Colonic mucosa (tissue), 4 donors: ENCODE measurements at regions of chr2 and their contacts with region 1.

Region 1: GRCh38 chr2:236180831-236181453 is 12.8 kb upstream of the GBX2 start:
- DNase-seq: peak; percentile 69
- H3K4me3 ChIP-seq: no peak overlapping the region
- H3K27ac ChIP-seq: no peak overlapping the region
- H3K4me1 ChIP-seq: peaks cover 3% of the 10 kb centered on the region
- H3K27me3 ChIP-seq: peaks cover 43% of the 10 kb centered on the region
- CTCF ChIP-seq: peak; percentile 69

Region 2: GRCh38 chr2:235551965-235552364 is 629.0 kb before region 1 on chr2:
- intact Hi-C with region 1: no loop called
- DNase-seq: peak; percentile 68
- H3K4me3 ChIP-seq: no peak overlapping the region
- H3K27ac ChIP-seq: no peak overlapping the region
- H3K4me1 ChIP-seq: peaks cover 6% of the 10 kb centered on the region
- H3K27me3 ChIP-seq: no peaks in the 10 kb centered on the region
- CTCF ChIP-seq: peak; percentile 52

Region 3: DNA sequence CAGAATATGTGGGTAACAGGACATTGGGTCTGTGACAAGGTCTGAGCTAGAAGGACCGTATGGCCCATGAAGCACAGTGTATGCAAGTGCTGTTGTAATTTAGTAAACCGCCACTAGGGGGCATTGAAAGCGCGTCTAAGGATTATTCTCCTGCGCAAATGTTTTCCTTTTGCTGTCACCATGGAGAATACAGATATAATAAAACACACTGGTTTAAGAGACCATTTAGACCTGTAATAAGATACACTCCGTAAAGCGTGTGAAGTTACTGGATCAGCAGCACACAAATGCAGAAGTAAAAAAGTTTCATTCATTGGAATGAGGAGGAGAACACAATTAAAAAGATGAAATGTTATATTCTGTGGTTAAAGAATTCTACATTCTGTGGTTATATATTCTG is 414.7 kb before region 1 on chr2:
- intact Hi-C with region 1: loop called (anchors 5 kb)
- DNase-seq: peak; percentile 85
- H3K4me3 ChIP-seq: no peak overlapping the region
- H3K27ac ChIP-seq: no peak overlapping the region
- H3K4me1 ChIP-seq: no peaks in the 10 kb centered on the region
- H3K27me3 ChIP-seq: no peaks in the 10 kb centered on the region
- CTCF ChIP-seq: peak; percentile 92

Region 4: GRCh38 chr2:235779444-235779896 is 401.5 kb before region 1 on chr2:
- intact Hi-C with region 1: loop called (anchors 5 kb)
- DNase-seq: peak; percentile 76
- H3K4me3 ChIP-seq: no peak overlapping the region
- H3K27ac ChIP-seq: no peak overlapping the region
- H3K4me1 ChIP-seq: no peaks in the 10 kb centered on the region
- H3K27me3 ChIP-seq: no peaks in the 10 kb centered on the region
- CTCF ChIP-seq: peak; percentile 79

Region 5: DNA sequence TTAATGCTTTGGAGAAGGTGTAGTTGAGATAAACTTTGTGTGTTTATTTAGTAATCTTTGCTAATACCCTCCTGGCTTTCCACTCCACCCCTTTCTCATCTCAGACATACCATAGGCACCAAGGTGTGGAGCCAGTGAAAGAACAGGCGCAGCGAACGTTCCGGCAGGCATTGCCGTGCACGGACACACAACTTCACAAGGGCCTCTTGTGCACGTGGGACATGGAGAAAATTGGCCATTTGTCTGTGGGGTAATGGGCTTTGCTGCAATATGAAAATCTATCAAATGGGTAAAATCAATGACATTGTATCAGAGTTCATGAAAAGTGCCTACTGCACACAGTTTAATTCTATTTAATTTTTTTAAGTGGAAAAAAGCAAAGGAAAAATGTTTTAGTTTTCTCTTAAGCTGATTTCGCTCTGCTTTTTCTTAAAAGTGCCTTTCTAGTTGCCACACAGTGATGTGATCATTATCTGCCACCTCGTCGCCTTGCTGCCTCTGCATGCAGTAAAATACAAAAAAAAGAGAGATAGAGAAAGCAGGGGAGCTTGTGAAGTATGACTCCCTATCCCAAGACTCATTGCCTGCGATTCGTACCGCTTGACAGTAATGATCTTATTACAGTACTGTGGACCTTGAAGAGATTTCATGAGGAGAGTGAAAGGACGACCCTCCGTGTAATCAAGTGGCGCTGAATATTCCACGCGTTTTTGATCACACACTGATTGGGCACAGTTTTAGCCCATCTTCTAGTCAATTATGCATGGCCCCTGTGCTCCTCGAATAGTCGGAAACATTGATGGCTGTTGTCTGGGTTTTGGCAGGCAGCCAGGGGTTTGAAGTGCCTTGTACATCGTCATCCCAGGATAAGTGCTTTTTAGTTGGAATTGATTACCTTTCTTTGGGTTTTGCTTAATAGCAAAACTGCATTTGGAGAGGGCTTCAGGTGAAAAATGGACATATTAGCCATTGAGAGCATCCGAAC is 201.2 kb before region 1 on chr2:
- intact Hi-C with region 1: no loop called
- DNase-seq: no peak
- H3K4me3 ChIP-seq: no peak overlapping the region
- H3K27ac ChIP-seq: no peak overlapping the region
- H3K4me1 ChIP-seq: no peaks in the 10 kb centered on the region
- H3K27me3 ChIP-seq: no peaks in the 10 kb centered on the region
- CTCF ChIP-seq: no peak

Region 6: DNA sequence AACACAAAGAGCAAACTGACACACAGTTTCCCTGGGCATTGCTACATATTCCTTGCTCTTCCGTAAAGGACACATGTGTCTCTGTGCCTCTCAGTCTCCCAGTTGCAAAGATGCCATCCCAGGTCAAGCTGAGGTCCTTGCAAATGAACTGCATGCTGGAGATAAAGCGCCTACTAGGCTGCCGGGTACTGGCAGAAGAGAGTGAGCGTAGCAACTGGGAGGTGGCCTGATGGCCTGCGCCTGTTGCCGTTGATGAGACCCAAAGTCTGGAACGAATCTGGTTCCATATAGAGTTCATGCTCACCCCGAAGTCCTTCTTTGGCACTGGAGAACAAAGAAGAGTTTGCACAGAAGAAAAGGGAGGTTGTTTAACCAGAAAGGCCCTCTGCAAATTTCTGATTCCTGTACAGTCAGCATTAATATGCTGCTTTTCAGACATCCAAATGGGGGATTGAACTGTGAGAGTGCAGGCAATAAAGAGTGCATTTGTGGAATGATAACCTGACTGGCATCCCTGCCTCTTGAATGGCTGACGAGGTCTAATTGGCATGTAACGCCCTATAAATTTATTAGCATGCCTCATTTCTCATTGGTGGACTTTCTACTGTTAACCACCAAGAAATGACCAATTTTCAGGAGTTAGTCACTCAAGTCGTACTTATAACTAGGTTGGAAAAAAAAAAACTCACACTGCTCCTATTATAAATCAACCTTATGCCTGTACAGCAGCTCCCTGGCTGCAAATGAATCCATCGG is 91.5 kb before region 1 on chr2:
- intact Hi-C with region 1: no loop called
- DNase-seq: no peak
- H3K4me3 ChIP-seq: no peak overlapping the region
- H3K27ac ChIP-seq: no peak overlapping the region
- H3K4me1 ChIP-seq: no peaks in the 10 kb centered on the region
- H3K27me3 ChIP-seq: no peaks in the 10 kb centered on the region
- CTCF ChIP-seq: no peak

Region 7: GRCh38 chr2:236343400-236344161 is 162.6 kb after region 1 on chr2:
- intact Hi-C with region 1: no loop called
- DNase-seq: peak; percentile 45
- H3K4me3 ChIP-seq: no peak overlapping the region
- H3K27ac ChIP-seq: no peak overlapping the region
- H3K4me1 ChIP-seq: no peaks in the 10 kb centered on the region
- H3K27me3 ChIP-seq: no peaks in the 10 kb centered on the region
- CTCF ChIP-seq: peak; percentile 84